ENCODE measurements at regions of chr2 and their contacts with region 1.

Region 1: DNA sequence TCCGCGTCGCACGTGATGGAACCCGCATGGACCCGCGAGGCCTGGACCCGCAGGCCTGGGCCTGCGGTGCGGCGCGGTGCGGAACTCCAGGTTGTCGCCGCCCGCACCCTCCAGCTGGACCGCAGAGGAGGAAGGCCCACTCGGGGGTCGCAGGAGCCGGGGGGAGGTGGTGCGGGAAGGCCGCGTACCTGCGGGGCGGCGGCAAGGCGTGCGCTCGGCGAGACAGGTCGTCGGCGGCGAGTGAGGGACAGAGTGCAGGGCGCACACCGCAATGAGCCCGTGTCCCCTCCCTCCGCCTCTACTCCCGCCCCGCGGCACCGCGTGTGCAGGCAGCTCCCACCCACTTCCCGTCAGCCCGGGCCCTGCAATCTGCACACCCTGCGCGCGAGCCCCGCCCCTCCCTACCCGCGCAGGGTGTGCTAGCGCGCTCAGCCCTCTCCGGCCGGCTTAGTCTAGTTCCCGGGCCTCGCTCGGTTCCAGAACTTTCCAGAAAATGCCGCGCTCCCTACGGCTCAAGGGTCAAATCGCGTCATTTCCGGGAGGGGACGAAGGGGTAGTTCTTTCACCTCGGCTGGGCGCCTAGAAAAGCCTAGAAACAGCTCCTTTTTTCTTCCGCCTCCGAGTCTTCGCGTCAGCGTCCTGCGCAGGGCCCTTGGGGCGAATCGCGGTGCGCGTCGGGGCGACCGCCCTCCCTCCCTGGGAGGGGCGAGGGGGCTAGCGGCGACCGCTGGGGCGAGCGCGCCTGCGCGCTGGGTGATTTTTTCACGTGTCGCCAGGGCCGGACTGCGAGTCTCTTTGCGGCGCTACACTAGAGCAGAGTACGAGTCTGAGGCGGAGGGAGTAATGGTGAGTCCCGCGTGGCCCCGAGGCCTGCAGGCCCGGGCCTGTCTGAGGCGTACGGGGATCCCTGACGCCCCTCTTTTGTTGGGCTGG is at the starts of genes HSPD1 and HSPE1:
- DNase-seq: peak; percentile 95 to 96
- H3K4me3 ChIP-seq: peak within 1 kb of the TSS; percentile 85 to 94 (median 90)
- H3K27ac ChIP-seq: peak within 1 kb of the TSS; percentile 92
- H3K4me1 ChIP-seq: peaks cover 2 to 7% (median 4%) of the 10 kb centered on the region in 4 experiments; a peak in 5 of 7 replicates
- H3K27me3 ChIP-seq: no peaks in the 10 kb centered on the region
- CTCF ChIP-seq: no peak
- EP300 ChIP-seq: peak in 1 of 2 experiments; percentile 37; a peak in 1 of 3 replicates
- POLR2A ChIP-seq: peak; percentile 93 to 96
- RAD21 ChIP-seq: peak in 1 of 2 experiments; percentile 14; a peak in 2 of 4 replicates
- total RNA-seq, gene HSPD1: 1,063 and 1,108 TPM in 2 replicates
- total RNA-seq, gene HSPE1: 364 and 377 TPM in 2 replicates

Region 2: GRCh38 chr2:197293252-197294007 is 206.4 kb before region 1 on chr2:
- CTCF ChIA-PET with region 1: no interaction called
- POLR2A ChIA-PET with region 1: no interaction called
- DNase-seq: no peak
- H3K4me3 ChIP-seq: no peak overlapping the region
- H3K27ac ChIP-seq: no peak overlapping the region
- H3K4me1 ChIP-seq: no peaks in the 10 kb centered on the region
- H3K27me3 ChIP-seq: no peaks in the 10 kb centered on the region
- CTCF ChIP-seq: no peak
- EP300 ChIP-seq: no peak
- POLR2A ChIP-seq: no peak
- RAD21 ChIP-seq: no peak

Region 3: DNA sequence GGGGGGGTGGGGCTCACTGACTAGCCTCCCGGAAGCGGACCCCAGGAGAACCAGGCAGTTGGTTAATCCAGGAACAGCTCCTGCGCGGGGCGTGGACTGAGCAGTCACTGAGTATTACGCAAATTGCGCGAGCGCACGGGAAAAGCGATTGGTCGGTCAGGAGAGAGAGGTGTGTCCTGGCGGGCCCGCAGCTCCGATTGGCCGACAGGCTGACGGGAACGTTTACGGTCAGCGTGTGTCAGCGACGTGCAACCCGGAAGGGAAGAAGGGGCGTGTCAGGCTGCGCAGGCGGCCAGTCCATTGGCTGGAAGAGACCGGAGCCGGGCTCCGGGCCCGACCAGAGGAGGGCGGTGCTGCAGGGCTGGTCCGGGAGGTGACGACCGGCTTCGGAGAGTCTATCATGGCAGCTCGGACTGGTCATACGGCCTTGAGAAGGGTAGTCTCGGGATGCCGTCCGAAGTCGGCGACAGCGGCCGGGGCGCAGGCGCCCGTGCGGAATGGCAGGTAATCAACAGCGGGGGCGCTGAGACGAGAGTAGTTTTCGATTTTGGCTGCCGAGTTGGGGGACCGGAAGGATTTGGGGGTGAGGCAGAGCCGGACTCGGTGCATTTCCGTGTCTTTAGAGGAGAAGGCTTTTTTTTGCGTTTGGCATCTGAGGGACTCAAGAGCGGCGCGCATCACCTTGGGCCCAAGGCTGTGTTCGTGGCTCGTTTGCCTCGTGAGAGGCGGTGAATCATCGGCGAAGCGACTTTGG is 46.5 kb before region 1 on chr2 and contains the start of gene COQ10B:
- CTCF ChIA-PET with region 1: interaction called, 4 read pairs
- POLR2A ChIA-PET with region 1: interaction called, 40 read pairs
- DNase-seq: peak; percentile 96 to 99
- H3K4me3 ChIP-seq: peak within 1 kb of the TSS; percentile 87 to 97 (median 93)
- H3K27ac ChIP-seq: peak within 1 kb of the TSS; percentile 87
- H3K4me1 ChIP-seq: peaks cover 0 to 5% (median 0%) of the 10 kb centered on the region in 4 experiments; a peak in 2 of 7 replicates
- H3K27me3 ChIP-seq: no peaks in the 10 kb centered on the region
- CTCF ChIP-seq: peak; percentile 0 to 23 (median 20); a peak in 2 of 4 replicates
- EP300 ChIP-seq: peak in 1 of 2 experiments; percentile 65; a peak in 1 of 3 replicates
- POLR2A ChIP-seq: peak; percentile 32 to 92
- RAD21 ChIP-seq: no peak
- total RNA-seq, gene COQ10B: 17.0 and 17.3 TPM in 2 replicates

Region 4: GRCh38 chr2:197480165-197481036 is 19.5 kb before region 1 on chr2:
- CTCF ChIA-PET with region 1: interaction called, 3 read pairs
- POLR2A ChIA-PET with region 1: interaction called, 270 read pairs
- DNase-seq: no peak
- H3K4me3 ChIP-seq: no peak overlapping the region
- H3K27ac ChIP-seq: no peak overlapping the region
- H3K4me1 ChIP-seq: no peaks in the 10 kb centered on the region
- H3K27me3 ChIP-seq: no peaks in the 10 kb centered on the region
- CTCF ChIP-seq: no peak
- EP300 ChIP-seq: no peak
- POLR2A ChIP-seq: no peak
- RAD21 ChIP-seq: no peak

Region 5: GRCh38 chr2:197515739-197516392 is 16.0 kb after region 1 on chr2 and contains the start of gene MOB4:
- CTCF ChIA-PET with region 1: interaction called, 4 read pairs
- POLR2A ChIA-PET with region 1: interaction called, 130 read pairs
- DNase-seq: peak; percentile 92 to 96
- H3K4me3 ChIP-seq: peak within 1 kb of the TSS; percentile 75 to 96 (median 90)
- H3K27ac ChIP-seq: peak within 1 kb of the TSS; percentile 81; the same call in 1 of the 2 replicates
- H3K4me1 ChIP-seq: peaks cover 0 to 9% (median 5%) of the 10 kb centered on the region in 4 experiments; a peak in 5 of 7 replicates
- H3K27me3 ChIP-seq: no peaks in the 10 kb centered on the region
- CTCF ChIP-seq: no peak
- EP300 ChIP-seq: peak; percentile 86 to 100; a peak in 2 of 3 replicates
- POLR2A ChIP-seq: peak; percentile 91 to 92
- RAD21 ChIP-seq: peak; percentile 15 to 18; a peak in 2 of 4 replicates
- total RNA-seq, gene MOB4: 46.8 and 54.2 TPM in 2 replicates

Region 6: GRCh38 chr2:197599285-197599965 is 99.6 kb after region 1 on chr2:
- CTCF ChIA-PET with region 1: interaction called, 9 read pairs
- POLR2A ChIA-PET with region 1: interaction called, 12 read pairs
- DNase-seq: peak in 1 of 2 experiments; percentile 33
- H3K4me3 ChIP-seq: no peak overlapping the region
- H3K27ac ChIP-seq: no peak overlapping the region
- H3K4me1 ChIP-seq: peaks cover 0 to 7% (median 5%) of the 10 kb centered on the region in 4 experiments; a peak in 5 of 7 replicates
- H3K27me3 ChIP-seq: no peaks in the 10 kb centered on the region
- CTCF ChIP-seq: peak; percentile 25 to 58 (median 44); a peak in 3 of 4 replicates
- EP300 ChIP-seq: no peak
- POLR2A ChIP-seq: no peak
- RAD21 ChIP-seq: peak; percentile 60 to 68

Measured in H1 (cell line).